ENCODE measurements at regions of chr5 and their contacts with region 1.

Region 1: DNA sequence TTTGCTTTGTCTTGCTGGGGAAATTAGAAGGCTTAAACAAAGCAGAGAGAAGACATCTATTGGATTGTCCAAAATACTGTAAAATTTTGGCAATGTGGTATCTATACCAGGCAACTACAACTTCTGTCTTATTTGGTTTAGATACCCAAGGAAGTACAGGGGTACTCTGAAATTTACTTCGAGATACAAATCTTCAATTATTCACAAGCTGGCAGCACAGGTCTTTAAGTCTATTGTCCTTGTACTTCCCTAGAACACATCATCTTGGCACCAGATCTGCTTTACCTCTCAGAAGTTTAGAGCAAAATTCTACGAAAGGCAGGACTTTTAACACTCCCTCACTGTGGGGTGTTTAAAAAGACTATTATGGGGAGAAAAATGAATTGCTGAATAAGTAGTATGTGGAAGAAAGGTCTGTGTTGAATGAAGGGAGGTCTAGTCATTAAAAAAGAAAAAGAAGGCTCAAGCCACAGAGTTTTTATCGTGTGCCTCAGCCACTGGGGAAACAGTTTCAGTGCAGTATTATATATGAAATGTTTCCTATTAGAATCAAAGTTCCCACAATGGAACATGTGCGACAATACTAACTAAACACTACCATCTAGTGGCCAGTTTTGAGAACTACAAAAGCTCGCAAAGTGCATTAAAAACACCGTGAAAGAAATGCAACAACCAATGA is 93.7 kb downstream of the PDE4D start:
- DNase-seq: peak in 3 of 35 experiments; percentile 3 to 67 (median 33)
- ATAC-seq: peak; percentile 45 to 70 (median 54)
- H3K4me3 ChIP-seq: no peak overlapping the region
- H3K4me3 Mint-ChIP-seq: no peak overlapping the region
- H3K27ac ChIP-seq: no peak overlapping the region
- H3K27ac Mint-ChIP-seq: no peak overlapping the region
- H3K4me1 ChIP-seq: peaks cover 0 to 7% of the 10 kb centered on the region in 2 experiments
- H3K4me1 Mint-ChIP-seq: no peaks in the 10 kb centered on the region
- H3K27me3 ChIP-seq: no peaks in the 10 kb centered on the region
- H3K27me3 Mint-ChIP-seq: peaks cover 3% of the 10 kb centered on the region in 2 donors

Region 2: GRCh38 chr5:59367791-59368394 is 431.9 kb before region 1 on chr5:
- CTCF ChIA-PET with region 1: interaction called in 1 of 2 experiments, 11 read pairs
- POLR2A ChIA-PET with region 1: no interaction called
- DNase-seq: peak in 29 of 35 experiments; percentile 1 to 64 (median 19)
- ATAC-seq: peak in 1 of 4 experiments; percentile 50
- H3K4me3 ChIP-seq: no peak overlapping the region
- H3K4me3 Mint-ChIP-seq: no peak overlapping the region
- H3K27ac ChIP-seq: no peak overlapping the region
- H3K27ac Mint-ChIP-seq: no peak overlapping the region
- H3K4me1 ChIP-seq: no peaks in the 10 kb centered on the region
- H3K4me1 Mint-ChIP-seq: peaks cover 0 to 2% (median 2%) of the 10 kb centered on the region in 3 donors
- H3K27me3 ChIP-seq: peaks cover 0 to 5% of the 10 kb centered on the region in 2 experiments
- H3K27me3 Mint-ChIP-seq: peaks cover 11 to 17% of the 10 kb centered on the region in 2 donors

Region 3: GRCh38 chr5:59786334-59786824 is 13.4 kb before region 1 on chr5:
- CTCF ChIA-PET with region 1: interaction called, 5 to 10 read pairs
- POLR2A ChIA-PET with region 1: no interaction called
- DNase-seq: no peak
- ATAC-seq: no peak
- H3K4me3 ChIP-seq: no peak overlapping the region
- H3K4me3 Mint-ChIP-seq: no peak overlapping the region
- H3K27ac ChIP-seq: no peak overlapping the region
- H3K27ac Mint-ChIP-seq: no peak overlapping the region
- H3K4me1 ChIP-seq: no peaks in the 10 kb centered on the region
- H3K4me1 Mint-ChIP-seq: peaks cover 10 to 12% (median 12%) of the 10 kb centered on the region in 3 donors
- H3K27me3 ChIP-seq: no peaks in the 10 kb centered on the region
- H3K27me3 Mint-ChIP-seq: peaks cover 3 to 16% of the 10 kb centered on the region in 2 donors

Region 4: GRCh38 chr5:59810041-59810440 is 10.2 kb after region 1 on chr5:
- CTCF ChIA-PET with region 1: interaction called, 6 to 13 read pairs
- POLR2A ChIA-PET with region 1: no interaction called
- DNase-seq: peak in 33 of 35 experiments; percentile 8 to 79 (median 31)
- ATAC-seq: peak; percentile 43 to 65 (median 59)
- H3K4me3 ChIP-seq: no peak overlapping the region
- H3K4me3 Mint-ChIP-seq: no peak overlapping the region
- H3K27ac ChIP-seq: no peak overlapping the region
- H3K27ac Mint-ChIP-seq: no peak overlapping the region
- H3K4me1 ChIP-seq: peaks cover 0 to 3% of the 10 kb centered on the region in 2 experiments
- H3K4me1 Mint-ChIP-seq: peaks cover 2 to 6% (median 4%) of the 10 kb centered on the region in 3 donors
- H3K27me3 ChIP-seq: peaks cover 0 to 3% of the 10 kb centered on the region in 2 experiments
- H3K27me3 Mint-ChIP-seq: peaks cover 13 to 17% of the 10 kb centered on the region in 2 donors

Measured in T-cell (primary cell).